ENCODE measurements at regions of chr1 and their contacts with region 1.

Region 1: DNA sequence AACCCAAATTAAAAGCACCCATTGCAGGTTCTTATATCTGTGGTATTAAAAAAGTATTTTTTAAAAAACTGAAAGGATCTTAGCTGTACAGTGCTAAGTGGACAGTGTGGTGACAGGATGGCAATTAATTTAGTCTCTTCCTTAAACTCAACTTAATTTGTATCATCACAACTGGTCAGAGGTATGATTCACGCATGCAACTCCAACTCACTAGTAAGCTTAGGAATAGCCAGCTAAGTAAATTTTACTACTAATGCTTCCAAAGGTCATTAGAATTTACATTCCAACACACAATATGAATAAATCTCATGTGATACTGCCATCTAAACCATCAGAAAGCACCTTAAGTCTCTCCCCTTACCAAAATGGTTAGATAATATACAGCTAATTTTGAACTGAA is 35.4 kb downstream of the ENAH start:
- DNase-seq: no peak
- H3K4me3 ChIP-seq: no peak overlapping the region
- H3K27ac ChIP-seq: no peak overlapping the region
- H3K4me1 ChIP-seq: no peaks in the 10 kb centered on the region
- CTCF ChIP-seq: no peak

Region 2: GRCh38 chr1:224996266-224996665 is 621.2 kb before region 1 on chr1:
- CTCF ChIA-PET with region 1: no interaction called
- POLR2A ChIA-PET with region 1: no interaction called
- intact Hi-C with region 1: no loop called
- DNase-seq: no peak
- H3K4me3 ChIP-seq: no peak overlapping the region
- H3K27ac ChIP-seq: no peak overlapping the region
- H3K4me1 ChIP-seq: no peaks in the 10 kb centered on the region
- CTCF ChIP-seq: no peak

Region 3: DNA sequence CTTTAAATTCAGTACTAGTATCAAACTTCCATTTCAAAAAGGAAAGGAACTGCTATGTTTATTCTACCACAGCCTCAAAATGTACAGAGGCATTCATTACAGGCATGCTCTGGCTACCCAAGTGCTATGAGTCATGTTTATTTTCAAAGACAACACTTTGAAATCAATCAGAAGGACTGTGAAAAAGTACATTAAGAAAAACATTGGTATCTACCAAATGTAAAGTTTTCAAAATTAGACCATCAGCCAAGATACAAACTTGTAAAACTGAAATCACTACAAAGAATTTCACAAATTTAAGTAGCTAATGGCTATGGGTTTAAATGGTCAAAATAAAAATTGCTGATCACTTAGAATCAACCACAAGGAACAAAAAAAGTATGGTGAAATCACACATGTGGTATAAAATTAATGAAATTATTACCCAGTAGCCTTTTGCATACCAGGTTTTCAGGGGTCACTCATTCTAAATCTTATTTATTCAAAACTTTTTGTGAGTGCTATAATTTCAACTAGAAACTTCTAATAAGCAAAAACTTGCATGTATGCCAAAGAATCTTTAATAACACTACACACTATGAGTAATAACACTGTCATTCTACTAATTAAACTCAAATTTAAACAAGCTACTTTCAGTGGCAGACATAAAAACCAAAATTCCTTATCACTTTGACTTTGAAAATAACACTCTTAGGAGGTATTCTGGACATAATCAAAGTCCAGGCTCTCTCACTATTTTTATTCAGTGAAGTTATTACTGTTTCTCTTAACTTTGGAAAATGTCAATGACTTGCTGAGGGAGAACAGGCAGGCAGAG is 13.7 kb before region 1 on chr1:
- CTCF ChIA-PET with region 1: no interaction called
- POLR2A ChIA-PET with region 1: interaction called, 11 read pairs
- intact Hi-C with region 1: no loop called
- DNase-seq: no peak
- H3K4me3 ChIP-seq: no peak overlapping the region
- H3K27ac ChIP-seq: no peak overlapping the region
- H3K4me1 ChIP-seq: no peaks in the 10 kb centered on the region
- CTCF ChIP-seq: no peak